Right ventricle myocardium inferior (tissue), 1 donor: ENCODE measurements at regions of chr22 and their contacts with region 1.

Region 1: GRCh38 chr22:36221799-36222751 is 17.3 kb downstream of the APOL2 start:
- DNase-seq: no peak
- ATAC-seq: peak; percentile 63

Region 2: DNA sequence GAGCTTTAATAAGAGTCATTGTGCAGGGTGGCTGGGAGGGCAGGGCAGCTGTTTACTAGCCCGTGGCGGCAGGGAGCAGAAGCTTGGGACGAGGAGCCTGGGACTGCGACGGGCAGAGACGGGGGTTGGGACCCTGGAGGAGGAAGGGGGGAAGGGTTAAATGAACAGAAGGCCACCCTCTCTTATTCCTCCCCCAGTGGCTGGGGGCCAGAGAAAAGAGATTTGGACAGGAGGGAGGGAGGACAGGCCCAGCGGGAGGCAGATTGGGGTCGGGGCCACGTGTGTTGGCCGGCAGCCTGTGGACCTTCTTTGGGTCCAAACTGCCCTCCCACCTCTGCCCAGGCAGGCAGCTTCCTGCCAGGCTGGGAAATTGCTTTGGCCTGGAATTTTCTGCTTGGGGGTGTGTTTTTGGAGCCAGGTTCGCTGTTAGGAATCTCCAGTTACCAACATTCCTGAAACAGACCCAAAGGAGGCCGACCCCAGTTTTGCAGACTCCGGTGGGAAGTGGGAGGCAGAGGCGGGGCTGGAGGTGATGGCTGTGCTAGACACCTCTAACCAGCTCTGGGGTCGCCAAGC is 111.7 kb before region 1 on chr22:
- intact Hi-C with region 1: no loop called
- DNase-seq: no peak
- ATAC-seq: no peak

Region 3: DNA sequence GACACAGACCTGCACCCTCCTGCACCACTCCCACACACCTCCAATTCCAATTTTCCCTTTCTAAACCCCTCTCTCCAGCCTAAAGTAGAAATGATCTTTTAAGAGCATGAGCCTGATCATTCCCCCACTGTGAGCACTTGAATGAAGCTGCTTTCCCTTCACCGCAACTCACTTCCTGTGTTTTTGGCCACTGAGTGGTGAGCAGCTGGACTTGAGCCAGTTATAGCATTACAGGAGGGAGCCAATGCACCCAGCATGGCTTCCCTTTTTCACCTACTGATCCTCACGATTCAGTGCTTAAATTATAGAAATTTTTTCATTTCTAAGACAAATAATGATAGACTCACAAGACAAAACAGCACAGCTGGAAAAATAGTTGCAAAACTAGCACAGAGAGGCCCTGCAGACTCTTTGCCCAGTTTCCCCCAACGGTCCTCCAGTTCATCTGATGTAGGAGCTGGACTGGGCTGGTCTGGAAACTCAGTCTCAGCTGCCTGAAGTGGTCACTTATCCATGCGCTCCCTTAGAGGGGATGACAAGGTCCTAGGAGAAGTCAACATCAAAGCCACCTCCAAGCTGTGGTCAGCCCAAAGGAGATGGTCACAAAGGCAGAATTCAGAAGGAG is 10.7 kb before region 1 on chr22:
- intact Hi-C with region 1: no loop called
- DNase-seq: no peak
- ATAC-seq: no peak

Region 4: GRCh38 chr22:36244522-36245391 is 22.7 kb after region 1 on chr22:
- intact Hi-C with region 1: loop called (anchors 2 kb)
- DNase-seq: no peak
- ATAC-seq: peak; percentile 94